Mammary epithelial cell (primary cell): ENCODE measurements at regions of chr13 and their contacts with region 1.

Region 1: GRCh38 chr13:46893798-46894560 is 2.9 kb downstream of the HTR2A start:
- DNase-seq: peak; percentile 31
- H3K4me3 ChIP-seq: peak overlapping the region; percentile 47 to 58 (median 57)
- H3K27ac ChIP-seq: no peak overlapping the region
- H3K4me1 ChIP-seq: peaks cover 4% of the 10 kb centered on the region
- H3K27me3 ChIP-seq: peaks cover 6% of the 10 kb centered on the region
- CTCF ChIP-seq: peak; percentile 51 to 94

Region 2: GRCh38 chr13:46687810-46688209 is 206.2 kb before region 1 on chr13:
- CTCF ChIA-PET with region 1: no interaction called
- dilution Hi-C with region 1: no loop called
- in situ Hi-C with region 1: no loop called
- intact Hi-C with region 1: no loop called
- DNase-seq: peak; percentile 50
- H3K4me3 ChIP-seq: no peak overlapping the region
- H3K27ac ChIP-seq: peak overlapping the region; percentile 35
- H3K4me1 ChIP-seq: peaks cover 5% of the 10 kb centered on the region
- H3K27me3 ChIP-seq: no peaks in the 10 kb centered on the region
- CTCF ChIP-seq: no peak

Region 3: GRCh38 chr13:46947425-46948191 is 53.6 kb after region 1 on chr13:
- CTCF ChIA-PET with region 1: interaction called, 3 read pairs
- dilution Hi-C with region 1: no loop called
- in situ Hi-C with region 1: no loop called
- intact Hi-C with region 1: loop called (anchors 5 kb)
- DNase-seq: no peak
- H3K4me3 ChIP-seq: no peak overlapping the region
- H3K27ac ChIP-seq: peak overlapping the region; percentile 48
- H3K4me1 ChIP-seq: peaks cover 31% of the 10 kb centered on the region
- H3K27me3 ChIP-seq: no peaks in the 10 kb centered on the region
- CTCF ChIP-seq: no peak

Region 4: GRCh38 chr13:47256618-47257017 is 362.6 kb after region 1 on chr13:
- CTCF ChIA-PET with region 1: no interaction called
- dilution Hi-C with region 1: no loop called
- in situ Hi-C with region 1: no loop called
- intact Hi-C with region 1: loop called (anchors 10 kb)
- DNase-seq: peak; percentile 85
- H3K4me3 ChIP-seq: no peak overlapping the region
- H3K27ac ChIP-seq: no peak overlapping the region
- H3K4me1 ChIP-seq: peaks cover 13% of the 10 kb centered on the region
- H3K27me3 ChIP-seq: no peaks in the 10 kb centered on the region
- CTCF ChIP-seq: no peak

Region 5: GRCh38 chr13:47598340-47598911 is 704.4 kb after region 1 on chr13:
- CTCF ChIA-PET with region 1: no interaction called
- dilution Hi-C with region 1: no loop called
- in situ Hi-C with region 1: no loop called
- intact Hi-C with region 1: loop called (anchors 10 kb)
- DNase-seq: no peak
- H3K4me3 ChIP-seq: no peak overlapping the region
- H3K27ac ChIP-seq: no peak overlapping the region
- H3K4me1 ChIP-seq: no peaks in the 10 kb centered on the region
- H3K27me3 ChIP-seq: peaks cover 2% of the 10 kb centered on the region
- CTCF ChIP-seq: peak; percentile 17 to 45